T-cell (primary cell): ENCODE measurements at regions of chr12 and their contacts with region 1.

Region 1: DNA sequence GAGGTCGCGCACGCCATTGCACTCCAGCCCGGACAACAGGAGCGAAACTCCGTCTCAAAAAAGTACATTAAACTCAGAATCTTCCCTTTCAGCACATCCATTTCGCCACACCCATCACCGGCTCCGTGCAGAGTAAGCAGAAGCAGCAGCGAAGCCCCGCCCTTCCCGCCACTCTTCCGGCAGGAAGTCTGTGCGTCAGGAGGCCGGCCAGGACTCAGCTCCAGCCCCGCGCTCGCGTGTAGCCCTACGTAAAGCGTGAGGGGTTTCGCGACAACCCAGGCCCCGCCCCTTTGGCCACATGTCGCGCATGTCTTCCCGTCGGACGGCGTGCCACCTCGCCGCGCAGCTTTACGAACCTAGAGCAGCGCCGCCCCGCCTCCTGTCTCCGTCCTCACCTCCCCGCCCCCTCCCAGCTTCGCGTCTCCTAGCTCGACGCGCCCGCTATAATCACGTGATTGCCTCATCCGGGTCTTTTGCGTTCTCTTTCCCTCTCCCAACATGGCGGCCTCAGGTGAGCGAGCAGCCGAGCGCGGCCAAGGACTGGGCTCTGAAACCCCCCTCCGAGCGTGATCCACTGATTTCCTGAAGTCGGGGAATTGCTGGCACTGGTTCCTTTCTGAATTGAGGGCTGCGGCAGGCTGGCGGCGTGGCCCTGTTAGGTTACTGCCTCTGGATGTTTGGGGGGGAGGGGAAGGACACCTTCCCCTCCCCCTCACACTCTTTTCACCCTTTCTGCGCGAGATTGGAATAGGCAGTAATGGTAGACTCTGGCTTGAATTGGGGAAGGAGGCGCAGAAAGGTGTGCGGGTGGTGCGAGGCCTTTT is at the start of gene EIF4B:
- DNase-seq: peak; percentile 94 to 100 (median 100)
- ATAC-seq: peak; percentile 88 to 94 (median 90)
- H3K4me3 ChIP-seq: peak within 1 kb of the TSS; percentile 95 to 100
- H3K4me3 Mint-ChIP-seq: peak within 1 kb of the TSS; percentile 98 to 100 (median 99)
- H3K27ac ChIP-seq: peak within 1 kb of the TSS; percentile 91
- H3K27ac Mint-ChIP-seq: peak within 1 kb of the TSS; percentile 97 to 98
- H3K4me1 ChIP-seq: peaks cover 30 to 42% of the 10 kb centered on the region in 2 experiments
- H3K4me1 Mint-ChIP-seq: peaks cover 48 to 57% (median 49%) of the 10 kb centered on the region in 3 donors
- H3K27me3 ChIP-seq: no peaks in the 10 kb centered on the region
- H3K27me3 Mint-ChIP-seq: peaks cover 0 to 3% of the 10 kb centered on the region in 2 donors
- total RNA-seq, gene EIF4B: 710 to 755 (median 729) TPM

Region 2: DNA sequence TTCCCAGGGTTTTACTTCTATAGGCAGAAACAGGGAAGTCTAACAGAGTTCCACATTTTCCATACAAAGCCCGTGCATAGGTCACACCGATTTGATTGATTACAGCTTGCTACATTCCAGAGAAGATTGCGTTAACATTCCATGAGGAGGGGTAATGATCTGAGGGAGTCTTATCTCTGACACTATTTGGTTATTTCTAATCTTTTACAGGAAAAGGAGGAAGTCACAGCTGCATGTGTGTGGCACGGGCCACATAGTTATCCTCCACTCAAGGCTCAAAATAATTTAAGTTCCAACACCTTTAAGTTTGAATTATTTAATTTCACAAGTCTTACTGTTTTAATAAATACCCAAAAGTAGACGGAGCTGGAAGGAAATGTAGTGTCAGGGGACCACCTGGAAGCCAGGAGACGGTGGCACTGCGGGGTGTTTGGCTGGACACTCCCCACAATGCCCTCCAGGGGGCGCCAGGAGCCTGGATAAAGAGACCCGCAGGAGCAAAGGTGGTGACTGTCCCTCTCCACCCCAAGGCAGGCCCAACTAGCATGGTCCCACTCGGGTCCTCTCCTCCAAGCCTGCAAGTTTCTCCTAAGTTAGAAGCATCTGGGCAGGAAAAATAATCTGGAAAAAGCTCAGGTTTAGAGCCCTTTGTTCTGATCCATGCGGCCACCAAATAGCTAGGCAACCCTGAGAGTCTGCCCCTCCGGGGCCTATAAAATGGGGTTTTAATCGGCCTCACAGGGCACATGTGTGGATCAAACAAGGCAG is 121.5 kb before region 1 on chr12:
- CTCF ChIA-PET with region 1: interaction called, 6 to 11 read pairs
- POLR2A ChIA-PET with region 1: interaction called in 1 of 2 experiments, 3 read pairs
- DNase-seq: peak; percentile 49 to 83 (median 74)
- ATAC-seq: peak; percentile 73 to 83 (median 80)
- H3K4me3 ChIP-seq: no peak overlapping the region
- H3K4me3 Mint-ChIP-seq: no peak overlapping the region
- H3K27ac ChIP-seq: no peak overlapping the region
- H3K27ac Mint-ChIP-seq: no peak overlapping the region
- H3K4me1 ChIP-seq: peaks cover 0 to 6% of the 10 kb centered on the region in 2 experiments
- H3K4me1 Mint-ChIP-seq: peaks cover 7 to 10% (median 7%) of the 10 kb centered on the region in 3 donors
- H3K27me3 ChIP-seq: peaks cover 0 to 43% of the 10 kb centered on the region in 2 experiments
- H3K27me3 Mint-ChIP-seq: peaks cover 10 to 16% of the 10 kb centered on the region in 2 donors

Region 3: GRCh38 chr12:52913076-52913821 is 92.9 kb before region 1 on chr12:
- CTCF ChIA-PET with region 1: no interaction called
- POLR2A ChIA-PET with region 1: no interaction called
- DNase-seq: no peak
- ATAC-seq: no peak
- H3K4me3 ChIP-seq: no peak overlapping the region
- H3K4me3 Mint-ChIP-seq: no peak overlapping the region
- H3K27ac ChIP-seq: no peak overlapping the region
- H3K27ac Mint-ChIP-seq: no peak overlapping the region
- H3K4me1 ChIP-seq: no peaks in the 10 kb centered on the region
- H3K4me1 Mint-ChIP-seq: peaks cover 0 to 1% (median 0%) of the 10 kb centered on the region in 3 donors
- H3K27me3 ChIP-seq: peaks cover 0 to 16% of the 10 kb centered on the region in 2 experiments
- H3K27me3 Mint-ChIP-seq: peaks cover 4 to 7% of the 10 kb centered on the region in 2 donors

Region 4: GRCh38 chr12:53054112-53054833 is 48.1 kb after region 1 on chr12:
- CTCF ChIA-PET with region 1: interaction called in 1 of 2 experiments, 11 read pairs
- POLR2A ChIA-PET with region 1: no interaction called
- DNase-seq: peak; percentile 83 to 96 (median 90)
- ATAC-seq: peak; percentile 90 to 93 (median 92)
- H3K4me3 ChIP-seq: peak overlapping the region; percentile 64 to 90
- H3K4me3 Mint-ChIP-seq: peak overlapping the region; percentile 92 to 98 (median 92)
- H3K27ac ChIP-seq: peak overlapping the region; percentile 52
- H3K27ac Mint-ChIP-seq: peak overlapping the region; percentile 87 to 92
- H3K4me1 ChIP-seq: peaks cover 2 to 17% of the 10 kb centered on the region in 2 experiments
- H3K4me1 Mint-ChIP-seq: peaks cover 10 to 15% (median 10%) of the 10 kb centered on the region in 3 donors
- H3K27me3 ChIP-seq: peaks cover 0 to 13% of the 10 kb centered on the region in 2 experiments
- H3K27me3 Mint-ChIP-seq: peaks cover 0 to 2% of the 10 kb centered on the region in 2 donors

Region 5: GRCh38 chr12:53204351-53204750 is 198.2 kb after region 1 on chr12:
- CTCF ChIA-PET with region 1: no interaction called
- POLR2A ChIA-PET with region 1: interaction called in 1 of 2 experiments, 15 read pairs
- DNase-seq: no peak
- ATAC-seq: no peak
- H3K4me3 ChIP-seq: no peak overlapping the region
- H3K4me3 Mint-ChIP-seq: peak overlapping the region; percentile 69 to 83 (median 78)
- H3K27ac ChIP-seq: no peak overlapping the region
- H3K27ac Mint-ChIP-seq: peak overlapping the region; percentile 83 to 87
- H3K4me1 ChIP-seq: peaks cover 48 to 88% of the 10 kb centered on the region in 2 experiments
- H3K4me1 Mint-ChIP-seq: peaks cover 87 to 91% (median 87%) of the 10 kb centered on the region in 3 donors
- H3K27me3 ChIP-seq: no peaks in the 10 kb centered on the region
- H3K27me3 Mint-ChIP-seq: no peaks in the 10 kb centered on the region